Activated CD4-positive, alpha-beta T cell treated with anti-CD3 and anti-CD28 coated beads for 36 hours (primary cell): ENCODE measurements at regions of chr7 and their contacts with region 1.

Region 1: GRCh38 chr7:1569833-1570633 is at the start of gene PSMG3:
- DNase-seq: peak; percentile 94
- ATAC-seq: peak; percentile 95
- H3K4me3 Mint-ChIP-seq: peak within 1 kb of the TSS; percentile 86
- H3K27ac Mint-ChIP-seq: peak within 1 kb of the TSS; percentile 92
- H3K4me1 Mint-ChIP-seq: peaks cover 37% of the 10 kb centered on the region
- H3K27me3 Mint-ChIP-seq: no peaks in the 10 kb centered on the region
- total RNA-seq, gene PSMG3: 21.4 to 33.0 TPM

Region 2: DNA sequence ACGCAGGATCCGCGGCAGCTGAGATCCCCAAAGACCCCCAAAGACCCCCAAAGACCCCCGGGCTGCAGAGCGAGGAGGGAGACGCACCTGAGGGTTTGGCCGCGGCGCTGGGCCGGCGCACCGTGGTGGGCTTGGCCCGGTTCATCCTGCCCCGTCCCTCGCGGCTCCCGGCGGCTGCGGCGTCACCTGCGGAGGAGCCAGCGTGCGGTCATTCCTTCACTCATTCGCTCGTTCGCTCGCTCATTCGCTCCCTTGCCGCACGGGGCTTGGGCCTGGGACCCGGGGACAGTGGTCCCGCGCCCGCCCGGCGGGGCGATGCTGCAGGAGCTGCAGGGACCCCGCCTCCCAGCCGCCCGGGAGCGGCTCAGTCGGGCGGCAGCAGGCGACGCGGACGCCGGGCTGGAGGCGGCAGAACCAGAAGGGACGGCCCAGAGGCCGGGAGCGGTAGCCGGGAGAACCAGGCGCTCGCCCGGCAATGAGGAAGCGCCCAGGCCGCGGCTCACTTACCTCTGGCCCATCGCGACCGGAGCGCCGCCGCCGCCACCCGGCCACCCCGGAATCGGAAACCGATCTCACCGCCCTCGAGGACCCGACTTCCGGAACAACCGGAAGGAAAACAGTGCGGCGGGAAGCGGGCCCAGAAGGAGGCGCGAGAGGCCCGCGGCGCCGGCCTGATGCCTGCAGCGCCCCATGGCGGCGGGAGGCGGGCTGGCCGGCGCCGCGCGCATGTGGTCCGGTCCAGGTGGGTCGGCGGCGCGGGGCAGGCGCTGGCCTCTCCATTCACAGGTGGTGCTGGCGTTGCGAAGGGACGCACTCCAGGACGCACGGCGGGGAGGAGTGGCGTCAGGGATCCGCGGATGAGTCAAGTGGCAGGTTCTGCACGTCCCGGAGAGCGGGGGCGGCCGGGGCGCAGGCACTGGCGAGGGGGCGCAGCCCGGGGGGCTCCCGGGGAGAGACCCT is 65.9 kb before region 1 on chr7 and contains the start of gene INTS1:
- CTCF ChIA-PET with region 1: interaction called, 3 read pairs
- POLR2A ChIA-PET with region 1: no interaction called
- intact Hi-C with region 1: loop called in 1 of 2 experiments (anchors 1 kb)
- DNase-seq: peak; percentile 95
- ATAC-seq: peak; percentile 88
- H3K4me3 Mint-ChIP-seq: peak within 1 kb of the TSS; percentile 85
- H3K27ac Mint-ChIP-seq: peak within 1 kb of the TSS; percentile 87
- H3K4me1 Mint-ChIP-seq: peaks cover 41% of the 10 kb centered on the region
- H3K27me3 Mint-ChIP-seq: no peaks in the 10 kb centered on the region
- total RNA-seq, gene INTS1: 78.1 to 81.7 TPM

Region 3: DNA sequence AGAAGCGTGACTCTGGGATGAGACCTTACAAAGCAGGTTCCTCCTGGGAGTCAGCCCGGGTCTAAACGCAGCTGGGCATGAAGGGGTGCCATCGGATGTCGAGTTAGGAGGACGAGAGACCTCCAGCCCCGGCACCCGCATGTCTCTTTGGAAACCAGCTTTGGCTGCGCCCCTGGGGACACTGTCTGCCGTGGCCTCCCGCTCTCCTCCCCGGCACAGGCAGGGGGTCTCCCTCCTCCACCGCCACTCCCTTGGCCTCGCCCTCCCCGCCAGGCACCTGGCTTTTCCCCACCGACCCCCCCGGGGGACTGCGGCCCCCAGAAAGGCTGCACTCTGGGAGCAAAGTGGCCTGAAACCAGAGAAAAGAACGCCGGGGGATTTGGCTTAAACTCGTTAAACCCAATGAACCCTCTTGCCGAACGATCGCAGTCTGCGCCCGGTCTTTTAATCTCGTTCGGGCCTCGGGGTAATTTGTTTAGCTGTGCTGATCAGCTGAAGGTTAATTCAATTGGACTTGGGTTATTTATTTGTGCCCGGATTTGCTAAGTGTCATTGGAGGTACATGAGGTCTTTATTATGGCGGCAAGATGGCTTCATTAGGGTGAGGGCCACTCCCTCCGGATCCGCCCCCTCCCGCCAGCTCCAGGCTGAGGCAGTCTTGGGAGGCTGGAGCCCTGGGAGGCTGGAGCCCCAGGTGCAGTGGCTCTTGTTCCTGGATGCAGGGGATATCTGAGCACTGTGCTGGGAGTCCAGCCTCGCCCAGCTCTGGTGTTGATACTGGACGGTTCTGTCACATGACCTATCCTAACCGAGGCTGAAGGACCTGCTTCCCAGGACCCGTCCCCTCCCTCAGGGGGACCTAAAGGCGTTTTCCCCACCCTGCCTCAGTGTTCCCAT is 16.3 kb after region 1 on chr7:
- CTCF ChIA-PET with region 1: no interaction called
- POLR2A ChIA-PET with region 1: no interaction called
- intact Hi-C with region 1: no loop called
- DNase-seq: no peak
- ATAC-seq: no peak
- H3K4me3 Mint-ChIP-seq: no peak overlapping the region
- H3K27ac Mint-ChIP-seq: no peak overlapping the region
- H3K4me1 Mint-ChIP-seq: peaks cover 3% of the 10 kb centered on the region
- H3K27me3 Mint-ChIP-seq: peaks cover 12% of the 10 kb centered on the region

Region 4: GRCh38 chr7:1758028-1758858 is 188.2 kb after region 1 on chr7:
- CTCF ChIA-PET with region 1: no interaction called
- POLR2A ChIA-PET with region 1: no interaction called
- intact Hi-C with region 1: loop called in 1 of 2 experiments (anchors 10 kb)
- DNase-seq: peak; percentile 66
- ATAC-seq: peak; percentile 60
- H3K4me3 Mint-ChIP-seq: no peak overlapping the region
- H3K27ac Mint-ChIP-seq: no peak overlapping the region
- H3K4me1 Mint-ChIP-seq: peaks cover 3% of the 10 kb centered on the region
- H3K27me3 Mint-ChIP-seq: peaks cover 4% of the 10 kb centered on the region

Region 5: DNA sequence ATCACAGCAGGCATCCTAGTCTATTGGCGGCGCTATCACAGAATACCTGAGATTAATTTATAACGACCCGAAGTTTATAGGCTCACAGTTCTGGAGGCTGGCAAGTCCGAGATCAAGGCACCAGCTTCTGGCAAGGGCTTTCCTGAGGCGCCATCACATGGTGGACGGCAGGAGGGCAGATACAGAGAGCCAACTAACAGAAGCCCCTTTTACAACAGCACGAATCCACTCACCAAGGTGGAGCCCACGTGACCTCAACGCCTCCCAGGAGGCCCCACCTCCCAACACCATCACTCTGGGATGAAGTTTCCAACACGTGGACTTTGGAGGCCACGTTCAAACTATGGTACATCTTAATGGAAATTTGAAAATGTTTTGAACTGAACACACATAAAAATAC is 355.3 kb after region 1 on chr7:
- CTCF ChIA-PET with region 1: no interaction called
- POLR2A ChIA-PET with region 1: no interaction called
- intact Hi-C with region 1: loop called in 1 of 2 experiments (anchors 5 kb)
- DNase-seq: peak; percentile 45
- ATAC-seq: no peak
- H3K4me3 Mint-ChIP-seq: peak overlapping the region; percentile 10
- H3K27ac Mint-ChIP-seq: no peak overlapping the region
- H3K4me1 Mint-ChIP-seq: peaks cover 86% of the 10 kb centered on the region
- H3K27me3 Mint-ChIP-seq: peaks cover 21% of the 10 kb centered on the region

Region 6: DNA sequence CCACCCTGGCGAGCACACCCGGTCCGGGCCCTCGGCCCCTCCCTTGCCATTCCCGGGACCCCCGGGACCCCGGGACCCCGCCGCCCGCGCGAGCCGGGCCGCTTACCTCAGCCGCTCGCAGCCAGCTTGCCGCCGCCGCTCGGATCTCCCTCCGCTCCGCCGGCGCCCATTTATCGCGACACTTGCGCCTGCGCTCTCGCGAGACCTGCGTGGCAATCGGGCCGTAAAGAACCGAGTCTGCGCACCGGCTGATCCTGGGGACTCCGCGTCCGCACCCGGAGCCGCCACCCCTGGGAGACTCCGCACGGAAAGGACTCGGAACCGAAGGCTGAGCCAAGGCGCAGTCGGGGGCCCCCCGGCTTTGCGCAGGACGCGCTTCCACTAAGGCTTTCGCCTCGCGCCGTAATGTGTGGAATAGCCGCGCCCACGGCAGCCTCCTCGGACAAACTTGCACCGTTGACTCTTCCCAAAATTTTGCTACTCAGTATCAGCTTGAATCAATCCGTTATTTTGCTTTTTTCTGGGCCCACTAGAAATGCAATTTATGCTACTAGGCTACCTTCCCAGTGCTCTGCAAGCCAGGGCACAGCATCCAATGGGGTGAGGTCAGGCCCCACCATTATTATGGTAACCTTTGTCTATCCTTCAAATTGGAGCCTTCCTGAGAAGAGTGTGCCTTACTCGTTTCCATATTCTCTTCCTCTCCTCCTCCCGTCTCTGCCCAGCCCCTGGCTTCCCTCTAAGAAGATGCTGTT is 662.9 kb after region 1 on chr7 and contains the start of gene MAD1L1:
- CTCF ChIA-PET with region 1: no interaction called
- POLR2A ChIA-PET with region 1: no interaction called
- intact Hi-C with region 1: loop called in 1 of 2 experiments (anchors 1 kb)
- DNase-seq: peak; percentile 95
- ATAC-seq: peak; percentile 94
- H3K4me3 Mint-ChIP-seq: peak within 1 kb of the TSS; percentile 83
- H3K27ac Mint-ChIP-seq: peak within 1 kb of the TSS; percentile 86
- H3K4me1 Mint-ChIP-seq: peaks cover 26% of the 10 kb centered on the region
- H3K27me3 Mint-ChIP-seq: no peaks in the 10 kb centered on the region
- total RNA-seq, gene MAD1L1: 50.2 to 61.7 TPM